ENCODE measurements at regions of chr12 and their contacts with region 1.

Region 1: GRCh38 chr12:33977887-33978286 is 44.4 kb upstream of the ALG10 start:
- DNase-seq: no peak
- ATAC-seq: no peak
- H3K4me3 ChIP-seq: no peak overlapping the region
- H3K27ac ChIP-seq: no peak overlapping the region
- H3K4me1 ChIP-seq: no peaks in the 10 kb centered on the region
- H3K27me3 ChIP-seq: no peaks in the 10 kb centered on the region
- CTCF ChIP-seq: no peak

Region 2: DNA sequence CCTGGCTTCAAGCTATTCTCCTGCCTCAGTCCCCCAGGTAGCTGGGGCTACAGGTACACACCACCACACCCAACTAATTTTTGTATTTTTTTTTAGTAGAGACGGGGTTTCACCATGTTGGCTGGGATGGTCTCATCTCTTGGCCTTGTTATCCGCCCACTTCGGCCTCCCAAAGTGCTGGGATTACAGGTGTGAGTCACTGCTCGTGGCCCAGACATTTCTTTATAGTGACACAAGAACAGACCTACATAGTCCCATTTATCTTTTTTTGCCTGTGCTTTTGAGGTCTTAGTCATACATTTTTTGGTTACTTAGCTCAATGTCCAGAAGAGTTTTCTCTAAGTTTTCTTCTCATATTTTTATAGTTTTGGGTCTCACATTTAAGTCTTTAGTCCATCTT is 785.7 kb before region 1 on chr12:
- CTCF ChIA-PET with region 1: no interaction called
- POLR2A ChIA-PET with region 1: no interaction called
- in situ Hi-C with region 1: no loop called
- intact Hi-C with region 1: loop called (anchors 10 kb)
- DNase-seq: no peak
- ATAC-seq: no peak
- H3K4me3 ChIP-seq: no peak overlapping the region
- H3K27ac ChIP-seq: no peak overlapping the region
- H3K4me1 ChIP-seq: no peaks in the 10 kb centered on the region
- H3K27me3 ChIP-seq: no peaks in the 10 kb centered on the region
- CTCF ChIP-seq: no peak

Region 3: DNA sequence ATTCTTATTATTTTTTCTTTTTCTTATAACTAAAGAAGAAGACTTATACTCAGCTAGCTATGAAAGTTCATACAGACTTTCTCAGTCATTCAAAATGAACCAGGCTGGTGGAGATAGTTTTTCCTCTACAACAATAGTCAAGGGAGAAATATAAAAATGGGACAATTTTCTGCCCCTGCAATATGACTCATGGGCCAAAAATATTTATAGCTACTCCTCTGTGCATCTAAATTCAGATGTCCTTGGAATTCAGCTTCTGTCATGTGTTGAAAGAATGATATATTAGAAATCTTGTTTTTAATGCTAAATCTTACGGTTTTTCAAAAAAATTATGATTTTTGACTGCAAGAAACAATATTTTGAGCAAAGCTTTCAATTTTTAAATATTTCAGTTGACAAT is 301.0 kb before region 1 on chr12:
- CTCF ChIA-PET with region 1: no interaction called
- POLR2A ChIA-PET with region 1: no interaction called
- in situ Hi-C with region 1: no loop called
- intact Hi-C with region 1: no loop called
- DNase-seq: no peak
- ATAC-seq: no peak
- H3K4me3 ChIP-seq: no peak overlapping the region
- H3K27ac ChIP-seq: no peak overlapping the region
- H3K4me1 ChIP-seq: no peaks in the 10 kb centered on the region
- H3K27me3 ChIP-seq: no peaks in the 10 kb centered on the region
- CTCF ChIP-seq: no peak

Region 4: GRCh38 chr12:33967760-33968159 is 10.1 kb before region 1 on chr12:
- CTCF ChIA-PET with region 1: no interaction called
- POLR2A ChIA-PET with region 1: no interaction called
- in situ Hi-C with region 1: no loop called
- intact Hi-C with region 1: no loop called
- DNase-seq: no peak
- ATAC-seq: no peak
- H3K4me3 ChIP-seq: no peak overlapping the region
- H3K27ac ChIP-seq: no peak overlapping the region
- H3K4me1 ChIP-seq: no peaks in the 10 kb centered on the region
- H3K27me3 ChIP-seq: no peaks in the 10 kb centered on the region
- CTCF ChIP-seq: no peak

Region 5: GRCh38 chr12:34033628-34034282 is 55.9 kb after region 1 on chr12:
- CTCF ChIA-PET with region 1: no interaction called
- POLR2A ChIA-PET with region 1: no interaction called
- in situ Hi-C with region 1: no loop called
- intact Hi-C with region 1: no loop called
- DNase-seq: no peak
- ATAC-seq: no peak
- H3K4me3 ChIP-seq: no peak overlapping the region
- H3K27ac ChIP-seq: no peak overlapping the region
- H3K4me1 ChIP-seq: no peaks in the 10 kb centered on the region
- H3K27me3 ChIP-seq: no peaks in the 10 kb centered on the region
- CTCF ChIP-seq: peak; percentile 28; the same call in 1 of the 2 replicates